GM12878 (cell line): ENCODE measurements at regions of chrX and their contacts with region 1.

Region 1: GRCh38 chrX:125436855-125437254 is 117.2 kb downstream of the TEX13C start:
- DNase-seq: no peak
- ATAC-seq: peak; percentile 62
- H3K4me3 ChIP-seq: no peak overlapping the region
- H3K27ac ChIP-seq: no peak overlapping the region
- H3K4me1 ChIP-seq: no peaks in the 10 kb centered on the region
- H3K27me3 ChIP-seq: no peaks in the 10 kb centered on the region
- CTCF ChIP-seq: peak; percentile 22 to 40 (median 29); a peak in 3 of 6 replicates
- EP300 ChIP-seq: no peak
- POLR2A ChIP-seq: no peak
- RAD21 ChIP-seq: peak; percentile 40; the same call in 1 of the 2 replicates

Region 2: DNA sequence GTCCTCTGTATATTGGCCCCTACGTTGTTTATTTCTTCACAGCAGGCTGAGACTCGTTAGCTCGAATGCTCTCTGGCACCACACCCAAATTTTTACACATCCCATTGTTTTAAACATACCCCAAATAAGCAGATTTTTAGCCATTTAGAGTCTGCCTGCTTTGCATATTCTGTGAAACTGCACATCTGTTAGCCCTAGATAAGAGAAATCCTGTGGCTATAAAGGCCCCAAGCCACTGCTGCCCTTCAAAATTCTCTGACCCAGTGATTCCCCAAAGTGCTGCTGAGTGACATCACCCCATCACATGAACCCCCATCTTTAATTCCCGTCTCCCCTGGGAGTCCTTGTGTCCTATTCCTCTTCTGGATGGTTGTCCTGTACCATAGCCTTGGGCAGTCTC is 96.4 kb before region 1 on chrX:
- CTCF ChIA-PET with region 1: no interaction called
- POLR2A ChIA-PET with region 1: no interaction called
- RAD21 ChIA-PET with region 1: no interaction called
- SMC1A ChIA-PET with region 1: no interaction called
- in situ Hi-C with region 1: no loop called
- intact Hi-C with region 1: no loop called
- DNase-seq: no peak
- ATAC-seq: no peak
- H3K4me3 ChIP-seq: no peak overlapping the region
- H3K27ac ChIP-seq: no peak overlapping the region
- H3K4me1 ChIP-seq: no peaks in the 10 kb centered on the region
- H3K27me3 ChIP-seq: no peaks in the 10 kb centered on the region
- CTCF ChIP-seq: no peak
- EP300 ChIP-seq: no peak
- POLR2A ChIP-seq: no peak
- RAD21 ChIP-seq: no peak

Region 3: GRCh38 chrX:125505207-125505606 is 68.4 kb after region 1 on chrX:
- CTCF ChIA-PET with region 1: no interaction called
- POLR2A ChIA-PET with region 1: no interaction called
- RAD21 ChIA-PET with region 1: no interaction called
- SMC1A ChIA-PET with region 1: no interaction called
- in situ Hi-C with region 1: no loop called
- intact Hi-C with region 1: no loop called
- DNase-seq: no peak
- ATAC-seq: no peak
- H3K4me3 ChIP-seq: no peak overlapping the region
- H3K27ac ChIP-seq: no peak overlapping the region
- H3K4me1 ChIP-seq: no peaks in the 10 kb centered on the region
- H3K27me3 ChIP-seq: no peaks in the 10 kb centered on the region
- CTCF ChIP-seq: no peak
- EP300 ChIP-seq: no peak
- POLR2A ChIP-seq: no peak
- RAD21 ChIP-seq: no peak

Region 4: GRCh38 chrX:125646195-125646594 is 209.3 kb after region 1 on chrX:
- CTCF ChIA-PET with region 1: no interaction called
- POLR2A ChIA-PET with region 1: no interaction called
- RAD21 ChIA-PET with region 1: no interaction called
- SMC1A ChIA-PET with region 1: no interaction called
- in situ Hi-C with region 1: no loop called
- intact Hi-C with region 1: loop called (anchors 5 kb)
- DNase-seq: no peak
- ATAC-seq: peak; percentile 71
- H3K4me3 ChIP-seq: no peak overlapping the region
- H3K27ac ChIP-seq: no peak overlapping the region
- H3K4me1 ChIP-seq: no peaks in the 10 kb centered on the region
- H3K27me3 ChIP-seq: no peaks in the 10 kb centered on the region
- CTCF ChIP-seq: peak in 2 of 3 experiments; percentile 34 to 35; a peak in 3 of 6 replicates
- EP300 ChIP-seq: no peak
- POLR2A ChIP-seq: no peak
- RAD21 ChIP-seq: peak; percentile 15; the same call in 1 of the 2 replicates